ENCODE measurements at regions of chr19 and their contacts with region 1.

Region 1: GRCh38 chr19:3357992-3358688 is 8.2 kb upstream of the NFIC start:
- DNase-seq: no peak
- H3K4me3 ChIP-seq: peak overlapping the region; percentile 99 to 100
- H3K27ac ChIP-seq: peak overlapping the region; percentile 99 to 100
- H3K4me1 ChIP-seq: peaks cover 18% of the 10 kb centered on the region
- H3K27me3 ChIP-seq: no peaks in the 10 kb centered on the region
- CTCF ChIP-seq: no peak
- POLR2A ChIP-seq: no peak

Region 2: DNA sequence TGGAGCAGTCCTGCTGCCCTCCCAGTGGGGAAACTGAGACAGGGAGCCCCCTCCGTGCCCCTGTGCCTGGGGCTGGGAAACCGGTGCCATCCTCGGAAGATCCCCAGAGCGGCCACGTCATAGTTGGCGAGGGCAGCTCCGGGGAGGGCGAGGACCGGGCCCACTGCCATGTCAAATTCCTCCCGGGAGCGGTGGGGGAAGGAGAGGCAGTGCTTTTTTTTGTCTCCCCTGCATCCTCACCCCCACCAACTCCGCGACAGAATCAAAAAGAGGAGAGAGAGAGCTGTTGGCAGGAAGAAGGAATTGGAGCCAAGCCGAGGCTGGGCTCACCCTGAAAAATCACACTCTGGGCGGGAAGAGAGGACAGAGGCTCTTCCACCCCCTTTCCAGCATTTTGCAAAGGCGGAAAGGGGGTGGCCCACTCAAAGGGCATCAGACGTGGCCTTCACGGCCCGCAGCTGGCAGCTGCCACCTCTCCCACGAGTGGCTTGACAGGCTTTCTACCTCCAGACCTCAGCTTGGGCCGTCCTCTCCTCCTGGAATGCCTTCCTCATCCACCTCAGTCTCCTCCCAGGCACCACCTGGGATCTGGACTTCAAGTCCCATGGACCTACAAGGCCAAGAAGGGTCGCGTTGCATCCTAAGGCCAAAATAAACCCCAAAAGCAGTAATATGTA is 11.3 kb before region 1 on chr19:
- intact Hi-C with region 1: loop called (anchors 1 kb)
- DNase-seq: peak; percentile 75
- H3K4me3 ChIP-seq: no peak overlapping the region
- H3K27ac ChIP-seq: peak overlapping the region; percentile 82
- H3K4me1 ChIP-seq: peaks cover 11% of the 10 kb centered on the region
- H3K27me3 ChIP-seq: no peaks in the 10 kb centered on the region
- CTCF ChIP-seq: no peak
- POLR2A ChIP-seq: no peak

Measured in prostate gland (tissue), 2 donors.